IMR-90 (cell line): ENCODE measurements at regions of chr1 and their contacts with region 1.

Region 1: GRCh38 chr1:65687428-65688214 is 105.1 kb upstream of the PDE4B start:
- DNase-seq: peak; percentile 60
- ATAC-seq: peak; percentile 90
- H3K4me3 ChIP-seq: no peak overlapping the region
- H3K27ac ChIP-seq: no peak overlapping the region
- H3K4me1 ChIP-seq: peaks cover 2% of the 10 kb centered on the region; the same call in 1 of the 2 replicates
- H3K27me3 ChIP-seq: peaks cover 7% of the 10 kb centered on the region
- CTCF ChIP-seq: peak; percentile 94
- POLR2A ChIP-seq: no peak
- RAD21 ChIP-seq: peak; percentile 98

Region 2: DNA sequence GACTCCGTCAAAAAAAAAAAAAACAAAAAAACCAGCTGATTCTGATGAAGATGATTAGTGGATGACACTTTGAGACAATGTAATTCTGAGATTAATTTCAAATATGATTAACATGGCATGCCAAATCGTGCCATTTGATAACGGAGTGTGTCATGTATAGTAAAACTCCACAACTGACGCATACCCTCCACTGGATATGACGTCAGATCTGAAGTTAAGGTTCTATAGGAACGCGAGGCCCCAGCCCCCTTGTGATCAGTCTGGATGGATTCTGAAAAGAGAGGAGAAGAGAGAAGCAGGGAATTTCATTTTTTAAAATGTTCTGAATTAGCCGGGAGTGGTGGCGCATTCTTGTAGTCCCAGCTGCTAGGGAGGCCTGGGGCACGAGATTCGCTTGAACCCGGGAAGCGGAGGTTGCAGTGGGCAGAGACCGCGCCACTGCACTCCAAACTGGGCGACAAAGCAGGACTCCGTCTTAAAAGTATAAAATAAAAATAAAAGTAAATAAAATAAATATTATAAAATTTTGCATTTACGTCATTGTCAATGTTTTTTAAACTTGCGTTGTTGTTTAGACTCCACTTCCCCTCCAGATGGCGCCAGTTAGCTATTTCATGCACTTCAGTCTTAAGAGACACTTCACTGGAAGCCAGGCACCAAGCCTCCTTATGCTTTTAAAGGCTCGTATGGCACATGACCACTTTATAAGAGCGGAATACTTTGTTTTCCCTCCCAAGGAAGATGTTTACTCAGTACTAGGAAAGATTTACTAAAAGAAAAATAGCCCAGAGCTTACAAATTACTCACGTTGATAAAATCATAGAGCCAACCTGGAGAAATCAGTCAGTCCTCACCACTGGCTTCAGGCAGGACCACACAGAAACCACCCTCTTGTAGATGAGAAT is 1418.7 kb before region 1 on chr1:
- CTCF ChIA-PET with region 1: no interaction called
- POLR2A ChIA-PET with region 1: no interaction called
- dilution Hi-C with region 1: no loop called
- in situ Hi-C with region 1: no loop called
- intact Hi-C with region 1: loop called (anchors 5 kb)
- DNase-seq: peak; percentile 85
- ATAC-seq: peak; percentile 96
- H3K4me3 ChIP-seq: no peak overlapping the region
- H3K27ac ChIP-seq: no peak overlapping the region
- H3K4me1 ChIP-seq: no peaks in the 10 kb centered on the region
- H3K27me3 ChIP-seq: peaks cover 9% of the 10 kb centered on the region
- CTCF ChIP-seq: peak; percentile 91
- POLR2A ChIP-seq: no peak
- RAD21 ChIP-seq: peak; percentile 91

Region 3: GRCh38 chr1:64882574-64883255 is 804.9 kb before region 1 on chr1:
- CTCF ChIA-PET with region 1: no interaction called
- POLR2A ChIA-PET with region 1: no interaction called
- dilution Hi-C with region 1: no loop called
- in situ Hi-C with region 1: no loop called
- intact Hi-C with region 1: loop called (anchors 10 kb)
- DNase-seq: no peak
- ATAC-seq: no peak
- H3K4me3 ChIP-seq: no peak overlapping the region
- H3K27ac ChIP-seq: no peak overlapping the region
- H3K4me1 ChIP-seq: peaks cover 3% of the 10 kb centered on the region
- H3K27me3 ChIP-seq: no peaks in the 10 kb centered on the region
- CTCF ChIP-seq: no peak
- POLR2A ChIP-seq: no peak
- RAD21 ChIP-seq: no peak

Region 4: GRCh38 chr1:65209005-65209885 is 478.4 kb before region 1 on chr1:
- CTCF ChIA-PET with region 1: interaction called, 9 read pairs
- POLR2A ChIA-PET with region 1: no interaction called
- dilution Hi-C with region 1: no loop called
- in situ Hi-C with region 1: loop called (anchors 10 kb)
- intact Hi-C with region 1: no loop called
- DNase-seq: peak; percentile 47
- ATAC-seq: peak; percentile 81
- H3K4me3 ChIP-seq: no peak overlapping the region
- H3K27ac ChIP-seq: no peak overlapping the region
- H3K4me1 ChIP-seq: no peaks in the 10 kb centered on the region; the same call in 1 of the 2 replicates
- H3K27me3 ChIP-seq: no peaks in the 10 kb centered on the region
- CTCF ChIP-seq: peak; percentile 62
- POLR2A ChIP-seq: no peak
- RAD21 ChIP-seq: peak; percentile 47

Region 5: GRCh38 chr1:65431111-65431705 is 256.4 kb before region 1 on chr1:
- CTCF ChIA-PET with region 1: interaction called, 5 read pairs
- POLR2A ChIA-PET with region 1: no interaction called
- dilution Hi-C with region 1: no loop called
- in situ Hi-C with region 1: loop called (anchors 5 kb)
- intact Hi-C with region 1: loop called (anchors 1 kb)
- DNase-seq: peak; percentile 55
- ATAC-seq: peak; percentile 53
- H3K4me3 ChIP-seq: no peak overlapping the region
- H3K27ac ChIP-seq: no peak overlapping the region
- H3K4me1 ChIP-seq: peaks cover 2% of the 10 kb centered on the region; the same call in 1 of the 2 replicates
- H3K27me3 ChIP-seq: no peaks in the 10 kb centered on the region
- CTCF ChIP-seq: peak; percentile 59
- POLR2A ChIP-seq: no peak
- RAD21 ChIP-seq: peak; percentile 62

Region 6: DNA sequence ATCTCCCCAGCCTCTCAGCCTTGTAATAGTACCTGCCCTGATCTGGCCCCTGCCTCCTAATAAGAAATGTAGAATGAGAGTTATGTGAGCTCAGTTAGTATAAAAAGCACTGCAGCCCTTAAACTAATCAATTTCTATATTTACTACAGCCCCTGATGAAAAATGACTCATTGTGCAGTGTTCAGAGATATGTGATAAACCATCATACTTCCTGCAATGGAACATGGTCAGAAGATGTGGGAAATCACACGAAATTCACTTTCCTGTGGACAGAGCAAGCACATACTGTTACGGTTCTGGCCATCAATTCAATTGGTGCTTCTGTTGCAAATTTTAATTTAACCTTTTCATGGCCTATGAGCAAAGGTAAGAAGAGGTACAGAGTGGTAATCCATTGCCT is 71.8 kb before region 1 on chr1:
- CTCF ChIA-PET with region 1: no interaction called
- POLR2A ChIA-PET with region 1: no interaction called
- dilution Hi-C with region 1: no loop called
- in situ Hi-C with region 1: no loop called
- intact Hi-C with region 1: no loop called
- DNase-seq: peak; percentile 2
- ATAC-seq: no peak
- H3K4me3 ChIP-seq: no peak overlapping the region
- H3K27ac ChIP-seq: no peak overlapping the region
- H3K4me1 ChIP-seq: no peaks in the 10 kb centered on the region
- H3K27me3 ChIP-seq: no peaks in the 10 kb centered on the region
- CTCF ChIP-seq: no peak
- POLR2A ChIP-seq: no peak
- RAD21 ChIP-seq: no peak

Region 7: GRCh38 chr1:65948609-65949229 is 261.1 kb after region 1 on chr1:
- CTCF ChIA-PET with region 1: no interaction called
- POLR2A ChIA-PET with region 1: no interaction called
- dilution Hi-C with region 1: no loop called
- in situ Hi-C with region 1: no loop called
- intact Hi-C with region 1: loop called (anchors 1 kb)
- DNase-seq: peak; percentile 79
- ATAC-seq: peak; percentile 86
- H3K4me3 ChIP-seq: no peak overlapping the region
- H3K27ac ChIP-seq: no peak overlapping the region
- H3K4me1 ChIP-seq: no peaks in the 10 kb centered on the region
- H3K27me3 ChIP-seq: no peaks in the 10 kb centered on the region
- CTCF ChIP-seq: peak; percentile 66
- POLR2A ChIP-seq: no peak
- RAD21 ChIP-seq: peak; percentile 85